Activated CD4-positive, alpha-beta memory T cell treated with anti-CD3 and anti-CD28 coated beads for 36 hours (primary cell): ENCODE measurements at regions of chr15 and their contacts with region 1.

Region 1: DNA sequence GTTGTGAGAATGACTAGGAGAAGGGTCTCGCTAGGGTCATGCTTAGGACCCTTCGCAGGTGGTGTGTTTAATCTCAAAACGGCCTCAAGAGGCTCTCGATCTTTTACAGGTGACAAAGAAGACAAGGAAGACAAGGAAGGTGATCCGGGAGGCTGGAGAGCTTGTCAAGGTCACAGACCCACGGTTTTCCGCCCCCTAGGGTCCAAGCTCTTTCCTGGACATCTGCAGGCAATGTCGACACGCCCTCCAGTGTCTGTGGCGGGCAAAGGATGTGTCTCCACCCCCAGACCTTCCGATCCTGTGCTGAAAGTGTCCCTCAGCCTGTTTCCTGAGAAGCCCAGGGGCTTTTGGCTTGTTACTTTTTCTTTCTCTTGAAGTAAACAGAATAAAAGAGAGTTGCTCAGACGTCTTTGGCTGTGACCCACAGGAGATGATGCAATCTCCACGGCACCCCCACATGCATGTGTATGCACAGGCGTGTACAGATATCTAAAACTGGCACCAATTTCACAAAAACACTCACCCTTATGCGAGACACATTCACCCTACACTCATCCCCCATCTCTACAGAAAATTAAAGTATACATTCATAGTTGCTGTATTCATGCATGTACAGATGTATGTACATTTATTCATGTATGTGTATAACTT is 108.8 kb downstream of the KLF13 start:
- DNase-seq: peak; percentile 92
- H3K4me3 Mint-ChIP-seq: peak overlapping the region; percentile 64
- H3K27ac Mint-ChIP-seq: peak overlapping the region; percentile 99
- H3K4me1 Mint-ChIP-seq: peaks cover 76% of the 10 kb centered on the region
- H3K27me3 Mint-ChIP-seq: no peaks in the 10 kb centered on the region

Region 2: DNA sequence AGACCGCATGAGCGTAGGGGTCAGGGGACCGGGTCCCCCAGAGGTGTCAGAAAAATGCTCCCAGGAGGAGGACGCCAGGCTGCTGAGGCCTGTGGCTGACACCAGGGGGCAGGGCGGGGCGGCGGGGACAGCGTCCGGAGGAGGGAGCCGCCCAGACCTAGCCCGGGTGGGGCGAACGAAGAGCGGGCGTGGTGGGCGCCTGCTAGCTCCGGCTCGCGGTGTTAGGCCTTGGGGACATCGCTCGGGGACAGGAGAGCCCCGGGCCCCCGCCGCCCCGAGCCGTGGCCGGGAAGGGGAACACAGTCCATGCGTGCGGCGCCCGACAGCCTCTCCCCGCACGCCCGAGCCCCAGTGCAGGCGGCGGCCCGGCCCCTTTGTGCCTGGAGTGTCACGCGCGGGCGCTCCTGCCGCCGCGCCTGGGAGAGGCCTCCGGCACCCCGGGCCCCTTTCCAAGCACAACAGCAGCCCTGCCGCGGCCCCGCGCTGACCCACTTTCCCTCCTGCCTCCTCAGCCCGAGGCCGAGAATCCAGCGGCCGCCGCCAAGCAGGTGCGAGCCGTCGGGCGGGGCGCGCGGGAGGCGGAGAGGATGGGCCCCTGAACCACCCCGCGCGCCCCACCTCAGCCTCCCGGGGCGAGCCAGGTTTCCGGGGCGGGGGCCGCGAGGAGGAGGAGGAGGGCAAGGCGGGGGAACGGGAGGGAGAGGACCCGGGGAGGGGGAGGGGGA is 219.7 kb before region 1 on chr15:
- CTCF ChIA-PET with region 1: interaction called, 26 read pairs
- POLR2A ChIA-PET with region 1: interaction called, 3 read pairs
- intact Hi-C with region 1: loop called (anchors 1 kb)
- DNase-seq: peak; percentile 88
- H3K4me3 Mint-ChIP-seq: peak overlapping the region; percentile 68
- H3K27ac Mint-ChIP-seq: peak overlapping the region; percentile 56
- H3K4me1 Mint-ChIP-seq: peaks cover 15% of the 10 kb centered on the region
- H3K27me3 Mint-ChIP-seq: no peaks in the 10 kb centered on the region

Region 3: GRCh38 chr15:31344823-31345605 is 90.4 kb before region 1 on chr15:
- CTCF ChIA-PET with region 1: interaction called, 22 read pairs
- POLR2A ChIA-PET with region 1: interaction called, 49 read pairs
- intact Hi-C with region 1: loop called (anchors 1 kb)
- DNase-seq: peak; percentile 63
- H3K4me3 Mint-ChIP-seq: peak overlapping the region; percentile 93
- H3K27ac Mint-ChIP-seq: peak overlapping the region; percentile 100
- H3K4me1 Mint-ChIP-seq: peaks cover 98% of the 10 kb centered on the region
- H3K27me3 Mint-ChIP-seq: no peaks in the 10 kb centered on the region

Region 4: DNA sequence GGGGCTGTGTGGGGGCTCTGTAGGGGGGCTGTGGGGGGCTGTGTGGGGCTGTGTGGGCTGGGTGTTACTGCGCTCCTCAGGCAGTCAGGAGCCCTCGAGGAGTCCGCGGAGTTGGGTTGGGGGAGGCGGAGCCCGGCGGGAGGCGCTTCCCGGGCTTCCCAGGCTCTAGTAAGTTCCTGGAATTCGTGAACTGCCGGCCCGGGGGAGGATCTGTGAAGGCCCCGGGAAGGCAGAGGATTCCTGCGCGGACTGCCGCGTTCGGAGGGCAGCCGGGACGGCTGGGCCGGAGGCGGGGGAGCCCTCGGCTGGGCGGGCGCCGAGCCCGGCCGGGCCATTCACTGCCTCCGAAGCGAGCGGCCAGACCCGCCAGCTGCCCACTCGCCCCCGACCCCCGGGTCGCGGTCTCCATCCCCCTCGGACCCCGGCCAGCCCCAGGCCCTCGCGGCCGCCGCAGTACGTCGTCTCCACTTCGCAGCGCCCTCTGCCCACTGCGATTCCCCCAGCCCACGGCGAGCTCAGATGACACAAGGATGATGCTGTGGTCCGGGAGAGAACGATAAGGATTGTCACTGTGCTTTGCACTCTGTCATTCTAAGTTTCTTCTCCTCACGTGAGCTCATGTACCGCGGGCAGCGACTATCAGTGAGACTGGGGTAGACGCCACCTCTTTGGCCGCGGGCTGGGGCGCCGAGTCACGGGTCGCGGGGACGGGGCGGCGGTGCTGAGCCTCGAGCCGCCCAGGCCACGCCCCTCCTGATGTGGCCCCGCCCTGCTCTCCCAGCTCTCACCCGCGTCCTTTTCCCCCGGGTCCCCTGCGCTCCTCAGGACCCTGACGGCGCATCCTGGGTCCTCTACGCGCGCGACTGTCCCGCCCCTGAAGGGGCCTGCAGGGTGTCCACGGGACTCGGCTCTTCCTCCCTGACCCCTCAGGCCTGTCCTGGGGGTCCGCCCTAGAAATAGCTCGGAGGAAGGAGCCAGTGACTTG is 43.4 kb before region 1 on chr15:
- CTCF ChIA-PET with region 1: interaction called, 14 read pairs
- POLR2A ChIA-PET with region 1: interaction called, 18 read pairs
- intact Hi-C with region 1: loop called (anchors 1 kb)
- DNase-seq: peak; percentile 90
- H3K4me3 Mint-ChIP-seq: peak overlapping the region; percentile 87
- H3K27ac Mint-ChIP-seq: peak overlapping the region; percentile 87
- H3K4me1 Mint-ChIP-seq: peaks cover 34% of the 10 kb centered on the region
- H3K27me3 Mint-ChIP-seq: no peaks in the 10 kb centered on the region

Region 5: DNA sequence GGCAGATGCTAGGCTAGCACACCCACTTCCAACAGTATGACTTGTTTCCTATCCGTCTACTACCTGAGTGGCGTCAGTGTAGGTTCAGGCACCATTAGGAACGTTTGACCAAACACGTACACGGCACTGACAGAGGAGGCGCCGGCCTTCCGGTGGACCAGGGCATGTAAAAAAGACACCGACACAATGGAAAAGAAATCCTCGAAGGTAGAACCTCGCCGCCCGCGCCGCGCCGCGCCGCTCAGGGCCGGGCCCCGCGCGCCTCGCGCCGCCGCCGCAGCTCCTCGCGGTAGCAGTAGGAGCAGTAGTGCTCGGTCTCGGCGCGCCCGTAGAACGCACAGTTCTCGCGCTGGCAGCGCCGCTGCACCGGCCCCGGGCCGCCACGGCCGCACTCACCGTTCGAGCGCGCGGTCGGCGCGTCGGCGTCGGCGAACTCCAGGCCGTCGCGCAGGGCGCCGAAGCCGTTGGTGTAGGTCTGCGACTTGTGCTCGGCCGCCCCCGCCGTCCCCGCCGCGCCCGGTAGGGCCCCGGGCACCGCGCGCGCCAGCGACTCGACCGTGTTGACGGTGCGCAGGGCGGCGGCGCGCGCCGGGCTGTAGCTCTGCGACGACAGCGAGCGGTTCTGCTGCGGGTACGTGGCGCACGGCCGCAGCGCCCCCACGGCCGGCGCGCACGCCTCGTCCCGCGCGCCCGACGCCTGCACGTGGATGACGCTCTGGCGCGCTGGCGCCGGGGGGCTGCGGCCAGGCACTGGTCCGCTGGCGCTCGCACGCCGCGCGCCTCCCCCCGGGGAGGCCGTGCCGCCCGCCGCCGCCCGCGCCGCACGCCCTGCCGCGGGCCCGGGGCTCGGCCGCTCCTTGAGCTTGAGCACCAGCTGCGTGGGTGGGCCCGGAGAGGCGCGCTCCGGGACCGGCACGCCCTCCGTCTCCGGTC is 47.9 kb after region 1 on chr15:
- CTCF ChIA-PET with region 1: interaction called, 312 read pairs
- POLR2A ChIA-PET with region 1: interaction called, 36 read pairs
- intact Hi-C with region 1: loop called (anchors 1 kb)
- DNase-seq: peak; percentile 73
- H3K4me3 Mint-ChIP-seq: peak overlapping the region; percentile 92
- H3K27ac Mint-ChIP-seq: peak overlapping the region; percentile 91
- H3K4me1 Mint-ChIP-seq: peaks cover 61% of the 10 kb centered on the region
- H3K27me3 Mint-ChIP-seq: peaks cover 5% of the 10 kb centered on the region